ENCODE measurements at regions of chr9 and their contacts with region 1.

Region 1: DNA sequence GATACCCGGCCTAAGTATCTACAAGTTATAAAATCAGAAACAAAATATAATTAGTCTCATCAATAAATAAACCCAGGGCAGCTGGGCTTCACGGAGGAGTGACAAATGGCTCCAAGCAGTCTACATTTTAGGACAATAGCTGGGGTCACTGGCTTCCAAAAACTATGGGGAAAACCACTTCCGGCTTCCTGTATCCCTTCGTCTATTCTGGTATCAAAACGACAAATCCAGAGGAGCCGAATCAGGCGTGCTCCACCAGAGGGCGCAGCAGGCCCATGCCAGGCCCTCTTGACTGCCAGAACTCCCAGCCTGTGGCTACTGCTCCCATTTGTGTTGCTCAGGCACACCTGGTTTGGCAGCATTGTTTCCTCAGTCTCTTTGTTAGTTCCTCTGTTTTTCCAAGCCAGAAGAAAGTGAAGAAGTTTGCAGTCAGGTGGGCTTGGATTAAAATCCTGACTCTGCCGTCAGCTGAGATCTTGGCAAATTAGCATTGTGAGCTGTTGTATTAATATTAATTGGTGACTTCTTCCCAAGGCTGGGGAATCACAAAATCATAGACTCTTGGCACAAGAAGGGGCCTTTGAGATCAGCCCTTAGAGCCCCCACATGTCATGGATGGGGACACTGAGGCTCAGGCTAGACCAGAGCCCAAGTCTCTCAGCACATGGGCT is 11.6 kb upstream of the RAB14 start:
- DNase-seq: peak; percentile 84
- H3K4me3 Mint-ChIP-seq: no peak overlapping the region
- H3K27ac Mint-ChIP-seq: no peak overlapping the region
- H3K4me1 Mint-ChIP-seq: peaks cover 5% of the 10 kb centered on the region
- H3K27me3 Mint-ChIP-seq: no peaks in the 10 kb centered on the region

Region 2: DNA sequence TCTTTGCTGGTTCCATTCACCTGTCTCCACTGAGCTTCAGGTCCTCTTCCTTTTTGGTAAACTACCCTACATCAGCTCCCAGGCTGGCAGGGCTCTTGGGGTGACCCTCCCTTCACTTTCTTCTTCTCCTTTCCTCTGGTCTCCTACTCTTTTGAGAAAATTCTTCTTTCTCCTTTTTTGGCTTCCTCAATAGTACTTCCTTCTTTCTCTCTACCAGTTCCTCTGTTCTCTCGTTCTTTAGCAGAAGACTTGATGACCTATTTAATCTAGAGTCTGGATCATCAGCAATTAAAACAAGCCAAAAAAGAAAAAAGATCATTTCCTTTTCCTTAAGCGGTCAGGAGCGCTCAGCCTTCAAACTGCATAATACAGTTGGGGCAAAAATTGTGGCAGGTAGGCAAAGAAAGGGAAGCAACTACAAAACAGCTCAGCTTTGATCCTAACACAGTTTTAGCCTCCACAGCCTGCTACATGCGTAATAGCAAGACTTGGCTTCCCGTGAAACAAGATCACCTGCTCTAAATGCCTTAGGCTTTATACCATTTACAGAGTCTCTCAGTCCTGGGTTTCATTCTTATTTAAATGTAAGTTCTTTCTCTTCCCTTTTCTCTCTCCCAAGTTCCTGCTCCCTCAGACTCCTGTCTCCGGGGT is 40.7 kb after region 1 on chr9:
- CTCF ChIA-PET with region 1: interaction called, 10 read pairs
- POLR2A ChIA-PET with region 1: no interaction called
- intact Hi-C with region 1: no loop called
- DNase-seq: no peak
- H3K4me3 Mint-ChIP-seq: no peak overlapping the region
- H3K27ac Mint-ChIP-seq: no peak overlapping the region
- H3K4me1 Mint-ChIP-seq: no peaks in the 10 kb centered on the region
- H3K27me3 Mint-ChIP-seq: no peaks in the 10 kb centered on the region

Region 3: GRCh38 chr9:121267689-121268597 is 54.7 kb after region 1 on chr9 and contains the start of gene GSN:
- CTCF ChIA-PET with region 1: interaction called, 13 read pairs
- POLR2A ChIA-PET with region 1: no interaction called
- intact Hi-C with region 1: no loop called
- DNase-seq: peak; percentile 66
- H3K4me3 Mint-ChIP-seq: peak within 1 kb of the TSS; percentile 58
- H3K27ac Mint-ChIP-seq: no peak within 1 kb of the TSS
- H3K4me1 Mint-ChIP-seq: peaks cover 13% of the 10 kb centered on the region
- H3K27me3 Mint-ChIP-seq: peaks cover 14% of the 10 kb centered on the region
- total RNA-seq, gene GSN: 2.6 to 2.9 TPM

Measured in activated CD4-positive, alpha-beta memory T cell treated with anti-CD3 and anti-CD28 coated beads for 36 hours (primary cell).